ENCODE measurements at regions of chr15 and their contacts with region 1.

Region 1: DNA sequence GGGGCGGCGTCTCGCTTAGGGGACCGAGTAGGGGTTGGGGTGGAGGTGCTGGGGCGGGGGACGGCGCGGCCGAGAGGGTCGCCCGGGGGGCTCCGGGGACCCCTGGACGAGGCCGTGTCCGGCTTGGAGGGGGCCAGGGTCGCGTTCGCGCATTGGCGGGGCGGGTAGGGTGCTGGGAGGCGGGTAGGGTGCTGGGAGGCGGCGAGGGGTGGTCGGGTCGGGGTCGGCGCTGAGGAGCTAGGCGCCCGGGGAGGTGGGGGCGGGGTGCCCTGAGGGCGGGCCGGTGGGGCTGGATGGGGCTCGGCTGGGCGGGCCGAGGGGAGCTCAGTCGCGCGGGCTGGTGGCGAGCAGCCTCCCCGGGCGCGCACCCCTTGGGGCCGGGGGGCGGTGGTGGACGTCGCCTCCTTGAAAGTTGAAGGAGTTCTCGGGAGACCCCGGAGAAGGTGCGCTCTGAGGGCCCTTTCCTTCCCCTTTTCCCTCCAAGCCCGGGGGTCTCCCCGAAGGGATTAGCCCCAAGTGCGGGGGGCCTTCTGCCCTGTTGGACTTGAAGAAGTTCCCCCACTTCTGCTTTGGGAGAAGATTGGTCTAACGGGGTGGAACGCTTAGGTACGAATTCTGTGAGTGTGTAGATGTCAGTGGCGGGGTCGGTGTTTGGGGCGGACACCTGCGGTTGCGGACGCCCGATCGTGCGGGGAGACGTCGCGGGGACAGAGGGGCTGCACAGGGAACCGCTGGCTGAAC is 543 bp downstream of the MEF2A start:
- DNase-seq: peak in 12 of 35 experiments; percentile 0 to 42 (median 13)
- ATAC-seq: peak in 3 of 4 experiments; percentile 3 to 8 (median 5)
- H3K4me3 ChIP-seq: peak overlapping the region; percentile 97 to 99
- H3K4me3 Mint-ChIP-seq: peak overlapping the region; percentile 97 to 99 (median 98)
- H3K27ac ChIP-seq: peak overlapping the region; percentile 94
- H3K27ac Mint-ChIP-seq: peak overlapping the region; percentile 85 to 92
- H3K4me1 ChIP-seq: peaks cover 20 to 22% of the 10 kb centered on the region in 2 experiments
- H3K4me1 Mint-ChIP-seq: peaks cover 53 to 61% (median 57%) of the 10 kb centered on the region in 3 donors
- H3K27me3 ChIP-seq: no peaks in the 10 kb centered on the region
- H3K27me3 Mint-ChIP-seq: no peaks in the 10 kb centered on the region

Region 2: GRCh38 chr15:99492716-99493115 is 73.6 kb before region 1 on chr15:
- CTCF ChIA-PET with region 1: no interaction called
- POLR2A ChIA-PET with region 1: interaction called in 1 of 2 experiments, 13 read pairs
- DNase-seq: no peak
- ATAC-seq: no peak
- H3K4me3 ChIP-seq: no peak overlapping the region
- H3K4me3 Mint-ChIP-seq: no peak overlapping the region
- H3K27ac ChIP-seq: no peak overlapping the region
- H3K27ac Mint-ChIP-seq: no peak overlapping the region
- H3K4me1 ChIP-seq: peaks cover 14 to 18% of the 10 kb centered on the region in 2 experiments
- H3K4me1 Mint-ChIP-seq: peaks cover 13 to 24% (median 13%) of the 10 kb centered on the region in 3 donors
- H3K27me3 ChIP-seq: peaks cover 0 to 11% of the 10 kb centered on the region in 2 experiments
- H3K27me3 Mint-ChIP-seq: peaks cover 0 to 7% of the 10 kb centered on the region in 2 donors

Region 3: DNA sequence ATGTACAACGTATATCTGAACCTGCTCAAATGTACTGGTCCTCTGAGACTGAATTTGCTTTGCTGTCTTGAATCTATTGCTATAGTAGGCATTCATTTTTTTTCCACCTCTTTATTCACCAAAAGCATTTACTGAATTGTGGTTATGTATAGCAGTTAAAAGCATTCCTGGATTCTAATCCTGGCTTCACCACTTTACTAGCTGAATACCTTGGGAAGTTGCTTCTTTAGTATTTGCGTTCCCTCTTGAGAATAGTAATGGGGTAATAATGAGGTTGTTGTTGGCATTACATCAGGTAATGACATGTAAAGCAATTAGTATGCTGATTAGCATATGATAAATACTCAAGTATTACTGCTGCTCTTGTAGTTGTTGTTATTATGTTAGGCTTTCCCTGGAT is 28.6 kb after region 1 on chr15:
- CTCF ChIA-PET with region 1: no interaction called
- POLR2A ChIA-PET with region 1: no interaction called
- DNase-seq: no peak
- ATAC-seq: no peak
- H3K4me3 ChIP-seq: no peak overlapping the region
- H3K4me3 Mint-ChIP-seq: no peak overlapping the region
- H3K27ac ChIP-seq: no peak overlapping the region
- H3K27ac Mint-ChIP-seq: no peak overlapping the region
- H3K4me1 ChIP-seq: no peaks in the 10 kb centered on the region
- H3K4me1 Mint-ChIP-seq: peaks cover 36 to 42% (median 40%) of the 10 kb centered on the region in 3 donors
- H3K27me3 ChIP-seq: no peaks in the 10 kb centered on the region
- H3K27me3 Mint-ChIP-seq: no peaks in the 10 kb centered on the region

Measured in T-cell (primary cell).